Activated naive CD4-positive, alpha-beta T cell treated with anti-CD3 and anti-CD28 coated beads, Interleukin-2, amount 10 ng/mL, durations not matched to agents 7 days and 5 days (primary cell): ENCODE measurements at regions of chr9 and their contacts with region 1.

Region 1: DNA sequence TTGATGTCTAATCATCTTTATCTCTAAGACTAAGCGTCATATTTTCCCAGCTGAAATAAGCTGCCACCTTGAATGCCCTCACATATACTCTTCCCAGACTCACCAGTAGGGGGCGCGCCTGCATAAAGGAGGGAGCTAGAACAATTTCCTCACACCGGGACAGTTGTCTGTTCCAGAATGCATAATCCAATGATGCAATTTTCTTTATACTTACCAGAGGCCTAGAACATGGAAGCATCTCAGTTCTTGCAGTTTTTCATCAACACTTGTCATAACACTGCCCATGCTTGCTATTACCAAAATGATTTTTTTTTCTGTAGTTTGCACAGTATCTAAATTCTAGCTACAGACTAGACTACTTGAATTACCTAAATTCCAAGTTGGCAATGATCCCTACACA is 203.9 kb downstream of the FRMD3 start:
- DNase-seq: peak; percentile 83
- H3K4me3 Mint-ChIP-seq: no peak overlapping the region
- H3K27ac Mint-ChIP-seq: no peak overlapping the region
- H3K4me1 Mint-ChIP-seq: peaks cover 4% of the 10 kb centered on the region
- H3K27me3 Mint-ChIP-seq: no peaks in the 10 kb centered on the region

Region 2: GRCh38 chr9:82745919-82746318 is 588.4 kb before region 1 on chr9:
- CTCF ChIA-PET with region 1: no interaction called
- DNase-seq: no peak
- H3K4me3 Mint-ChIP-seq: no peak overlapping the region
- H3K27ac Mint-ChIP-seq: no peak overlapping the region
- H3K4me1 Mint-ChIP-seq: no peaks in the 10 kb centered on the region
- H3K27me3 Mint-ChIP-seq: no peaks in the 10 kb centered on the region

Region 3: GRCh38 chr9:83538172-83538889 is 204.0 kb after region 1 on chr9 and contains the start of gene FRMD3:
- CTCF ChIA-PET with region 1: interaction called, 175 read pairs
- DNase-seq: peak; percentile 47
- H3K4me3 Mint-ChIP-seq: peak within 1 kb of the TSS; percentile 51
- H3K27ac Mint-ChIP-seq: no peak within 1 kb of the TSS
- H3K4me1 Mint-ChIP-seq: peaks cover 4% of the 10 kb centered on the region
- H3K27me3 Mint-ChIP-seq: peaks cover 44% of the 10 kb centered on the region

Region 4: DNA sequence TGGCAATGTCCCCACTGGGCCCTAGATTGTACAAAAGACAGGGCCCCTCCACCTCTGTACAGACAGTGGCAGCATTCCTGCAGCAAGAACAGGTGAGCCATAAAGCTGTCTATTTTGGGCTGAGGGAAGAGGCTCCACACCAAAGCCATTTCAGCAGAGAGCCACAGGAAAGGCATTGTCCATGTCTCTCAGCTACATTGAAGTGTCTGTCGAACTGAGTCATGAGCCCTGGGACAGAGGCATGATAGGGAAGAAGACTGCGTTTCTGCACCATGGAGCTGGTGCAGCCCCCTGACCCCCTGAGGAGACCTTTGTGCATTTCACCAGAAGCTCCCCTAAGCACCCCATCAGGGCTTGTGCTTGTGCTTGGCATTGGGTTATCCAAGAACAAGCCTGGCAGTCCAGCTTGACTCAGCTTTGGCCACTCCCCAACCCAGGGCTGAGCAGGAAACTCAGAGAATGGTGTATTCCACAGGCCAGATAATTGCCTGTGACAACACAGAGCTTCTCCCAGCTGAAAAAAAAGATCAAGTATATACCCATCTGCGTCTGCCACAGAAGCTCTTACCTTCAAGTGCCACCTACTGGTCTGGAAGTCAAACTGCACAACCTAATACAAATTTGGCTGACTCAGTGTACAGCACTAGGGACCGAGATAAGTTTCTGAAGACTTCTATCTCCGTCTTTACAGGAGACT is 209.8 kb after region 1 on chr9:
- CTCF ChIA-PET with region 1: interaction called, 175 read pairs
- DNase-seq: no peak
- H3K4me3 Mint-ChIP-seq: no peak overlapping the region
- H3K27ac Mint-ChIP-seq: no peak overlapping the region
- H3K4me1 Mint-ChIP-seq: no peaks in the 10 kb centered on the region
- H3K27me3 Mint-ChIP-seq: peaks cover 13% of the 10 kb centered on the region

Region 5: GRCh38 chr9:83596896-83597504 is 262.7 kb after region 1 on chr9:
- CTCF ChIA-PET with region 1: interaction called, 49 read pairs
- DNase-seq: peak; percentile 63
- H3K4me3 Mint-ChIP-seq: no peak overlapping the region
- H3K27ac Mint-ChIP-seq: no peak overlapping the region
- H3K4me1 Mint-ChIP-seq: no peaks in the 10 kb centered on the region
- H3K27me3 Mint-ChIP-seq: no peaks in the 10 kb centered on the region

Region 6: DNA sequence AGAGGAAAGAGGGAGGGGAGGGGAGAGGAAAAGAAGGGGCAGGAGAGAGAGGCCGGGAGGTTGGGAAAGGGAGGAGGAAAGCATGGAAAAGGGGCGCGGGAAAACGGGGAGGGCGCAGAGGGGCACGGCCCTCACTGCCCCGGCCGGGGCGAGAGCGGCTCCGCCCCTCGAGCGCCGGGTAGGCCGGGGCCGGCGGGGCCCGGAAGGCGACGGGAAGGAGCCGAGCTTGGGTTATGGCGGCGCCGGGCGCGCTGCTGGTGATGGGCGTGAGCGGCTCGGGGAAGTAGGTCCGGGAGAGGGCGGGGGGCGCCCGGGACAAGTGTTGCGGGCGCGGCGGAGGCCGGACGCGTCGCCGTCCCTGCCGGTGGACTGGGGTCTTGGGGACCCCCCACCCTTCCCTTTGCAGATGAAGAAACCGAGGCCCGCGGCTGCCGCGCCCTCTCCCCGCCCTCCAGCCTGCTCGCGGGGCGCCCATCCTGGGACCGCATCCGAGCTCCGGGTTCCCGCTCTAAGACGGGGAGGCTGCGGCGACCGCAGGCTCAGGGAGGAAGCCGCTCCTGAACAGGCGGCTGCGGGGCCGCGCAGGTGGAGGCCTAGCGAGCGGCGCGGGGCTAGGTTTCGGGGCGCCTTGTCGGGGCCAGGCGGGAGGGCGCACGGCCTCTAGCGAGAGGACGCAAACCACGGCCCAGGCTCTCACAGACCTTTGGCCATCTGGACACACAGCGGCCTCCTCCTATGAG is 288.8 kb after region 1 on chr9 and contains the start of gene IDNK:
- CTCF ChIA-PET with region 1: interaction called, 12 read pairs
- DNase-seq: peak; percentile 78
- H3K4me3 Mint-ChIP-seq: peak within 1 kb of the TSS; percentile 90
- H3K27ac Mint-ChIP-seq: peak within 1 kb of the TSS; percentile 96
- H3K4me1 Mint-ChIP-seq: peaks cover 28% of the 10 kb centered on the region
- H3K27me3 Mint-ChIP-seq: peaks cover 7% of the 10 kb centered on the region